ENCODE measurements at regions of chr20 and their contacts with region 1.

Region 1: DNA sequence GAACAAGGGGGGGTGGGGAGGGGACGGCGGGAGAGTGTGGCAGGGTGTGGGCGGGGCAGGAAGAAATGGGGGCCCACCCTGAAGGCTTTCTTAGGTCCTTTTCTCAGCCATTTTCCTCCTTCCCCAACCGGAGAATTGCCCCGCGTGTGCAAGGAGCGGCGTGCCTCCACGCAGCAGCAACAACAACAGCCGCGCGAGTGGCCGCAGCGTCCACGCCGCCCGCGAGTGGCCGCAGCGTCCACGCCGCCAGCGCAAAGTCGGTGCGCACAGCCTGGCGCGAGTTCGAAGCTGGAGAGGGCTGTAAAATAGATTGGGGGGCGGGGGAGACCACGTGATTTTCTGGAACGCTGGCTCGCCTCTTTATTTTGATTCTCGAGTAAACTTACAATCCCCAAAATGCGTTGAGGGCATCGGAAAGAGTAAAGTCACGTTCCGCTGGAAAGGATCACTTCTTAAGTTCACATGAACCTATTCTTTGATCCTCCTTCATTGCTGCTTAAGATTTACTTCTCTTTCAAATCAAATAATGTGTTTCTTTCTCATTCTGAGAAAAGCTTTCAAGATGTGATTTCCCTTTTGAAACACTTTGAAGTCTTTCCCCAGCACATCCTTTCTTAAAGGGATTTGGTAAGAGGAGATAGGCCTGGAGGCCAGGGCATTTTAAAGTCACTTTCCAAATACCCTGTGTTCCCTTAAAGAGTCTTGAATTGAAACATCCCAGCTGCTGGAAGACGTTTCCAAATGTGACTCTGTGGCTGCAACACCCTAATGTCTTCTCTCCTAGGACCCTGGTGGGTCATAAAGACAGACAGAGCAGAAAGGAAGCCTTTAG is 66.7 kb upstream of the ZNF217 start:
- DNase-seq: peak in 2 of 5 donors; percentile 16 to 18
- H3K4me3 ChIP-seq: peak overlapping the region; percentile 56 to 66
- H3K4me3 Mint-ChIP-seq: peak overlapping the region; percentile 77 to 91 (median 88)
- H3K27ac ChIP-seq: peak overlapping the region; percentile 41
- H3K27ac Mint-ChIP-seq: peak overlapping the region; percentile 63 to 93 (median 89)
- H3K4me1 ChIP-seq: peaks cover 46% of the 10 kb centered on the region
- H3K4me1 Mint-ChIP-seq: peaks cover 36 to 70% (median 50%) of the 10 kb centered on the region in 4 donors
- H3K27me3 ChIP-seq: no peaks in the 10 kb centered on the region
- H3K27me3 Mint-ChIP-seq: no peaks in the 10 kb centered on the region

Region 2: GRCh38 chr20:53245574-53245973 is 414.7 kb before region 1 on chr20:
- CTCF ChIA-PET with region 1: no interaction called
- POLR2A ChIA-PET with region 1: no interaction called
- intact Hi-C with region 1: no loop called
- DNase-seq: no peak
- H3K4me3 ChIP-seq: no peak overlapping the region
- H3K4me3 Mint-ChIP-seq: no peak overlapping the region
- H3K27ac ChIP-seq: no peak overlapping the region
- H3K27ac Mint-ChIP-seq: no peak overlapping the region
- H3K4me1 ChIP-seq: no peaks in the 10 kb centered on the region
- H3K4me1 Mint-ChIP-seq: peaks cover 0 to 6% (median 0%) of the 10 kb centered on the region in 4 donors
- H3K27me3 ChIP-seq: no peaks in the 10 kb centered on the region
- H3K27me3 Mint-ChIP-seq: peaks cover 2 to 10% of the 10 kb centered on the region in 2 donors

Region 3: GRCh38 chr20:53444401-53445149 is 215.7 kb before region 1 on chr20:
- CTCF ChIA-PET with region 1: no interaction called
- POLR2A ChIA-PET with region 1: no interaction called
- intact Hi-C with region 1: no loop called
- DNase-seq: no peak
- H3K4me3 ChIP-seq: no peak overlapping the region
- H3K4me3 Mint-ChIP-seq: no peak overlapping the region
- H3K27ac ChIP-seq: no peak overlapping the region
- H3K27ac Mint-ChIP-seq: no peak overlapping the region
- H3K4me1 ChIP-seq: no peaks in the 10 kb centered on the region
- H3K4me1 Mint-ChIP-seq: peaks cover 0 to 2% (median 0%) of the 10 kb centered on the region in 4 donors
- H3K27me3 ChIP-seq: no peaks in the 10 kb centered on the region
- H3K27me3 Mint-ChIP-seq: peaks cover 1 to 5% of the 10 kb centered on the region in 2 donors

Region 4: GRCh38 chr20:53708129-53708968 is 48.1 kb after region 1 on chr20:
- CTCF ChIA-PET with region 1: interaction called, 7 read pairs
- POLR2A ChIA-PET with region 1: interaction called, 6 read pairs
- intact Hi-C with region 1: loop called (anchors 5 kb)
- DNase-seq: peak in 4 of 5 donors; percentile 17 to 41 (median 26)
- H3K4me3 ChIP-seq: no peak overlapping the region
- H3K4me3 Mint-ChIP-seq: peak overlapping the region in 7 of 8 donors; percentile 31 to 91 (median 69)
- H3K27ac ChIP-seq: peak overlapping the region; percentile 3
- H3K27ac Mint-ChIP-seq: peak overlapping the region; percentile 76 to 98 (median 92)
- H3K4me1 ChIP-seq: peaks cover 39% of the 10 kb centered on the region
- H3K4me1 Mint-ChIP-seq: peaks cover 31 to 47% (median 36%) of the 10 kb centered on the region in 4 donors
- H3K27me3 ChIP-seq: no peaks in the 10 kb centered on the region
- H3K27me3 Mint-ChIP-seq: no peaks in the 10 kb centered on the region

Region 5: DNA sequence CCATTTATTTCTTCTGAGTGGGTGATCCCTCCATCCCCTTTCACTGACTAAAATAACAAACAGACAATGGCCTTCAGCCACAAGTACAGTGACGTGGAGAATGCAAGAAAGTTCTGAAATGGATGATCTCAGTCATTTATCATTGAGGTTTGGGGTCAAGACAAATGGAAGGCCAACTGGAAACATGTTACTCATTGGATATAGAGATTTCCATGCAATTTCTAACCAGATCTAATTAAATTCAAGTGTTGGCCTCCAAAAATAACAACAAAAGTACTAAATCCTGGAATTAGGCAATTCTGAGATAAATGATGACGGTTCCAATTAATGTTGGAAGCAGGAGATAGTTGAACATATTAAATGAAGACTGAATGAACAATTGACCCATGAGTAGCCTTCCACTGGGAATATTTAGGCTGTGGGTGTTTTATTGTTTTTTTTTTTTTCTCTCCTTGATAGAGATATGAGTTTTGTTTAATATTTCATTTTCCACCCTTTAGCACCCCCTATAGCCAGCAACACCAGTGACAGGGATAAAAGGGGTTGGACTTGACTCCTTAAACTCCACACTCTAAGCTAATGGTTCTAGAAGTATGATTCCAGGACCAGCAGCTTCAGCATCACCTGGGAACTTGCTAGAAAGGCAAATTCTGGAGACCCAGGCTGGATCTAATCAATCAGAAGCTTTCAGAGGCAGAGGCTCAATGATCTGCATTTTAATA is 297.3 kb after region 1 on chr20:
- CTCF ChIA-PET with region 1: no interaction called
- POLR2A ChIA-PET with region 1: no interaction called
- intact Hi-C with region 1: no loop called
- DNase-seq: no peak
- H3K4me3 ChIP-seq: no peak overlapping the region
- H3K4me3 Mint-ChIP-seq: no peak overlapping the region
- H3K27ac ChIP-seq: no peak overlapping the region
- H3K27ac Mint-ChIP-seq: no peak overlapping the region
- H3K4me1 ChIP-seq: no peaks in the 10 kb centered on the region
- H3K4me1 Mint-ChIP-seq: peaks cover 1 to 4% (median 3%) of the 10 kb centered on the region in 4 donors
- H3K27me3 ChIP-seq: no peaks in the 10 kb centered on the region
- H3K27me3 Mint-ChIP-seq: peaks cover 0 to 6% of the 10 kb centered on the region in 2 donors